ENCODE measurements at regions of chr12 and their contacts with region 1.

Region 1: GRCh38 chr12:70719672-70720420 is 82.6 kb upstream of the PTPRB start:
- DNase-seq: peak; percentile 16 to 94 (median 53)

Region 2: DNA sequence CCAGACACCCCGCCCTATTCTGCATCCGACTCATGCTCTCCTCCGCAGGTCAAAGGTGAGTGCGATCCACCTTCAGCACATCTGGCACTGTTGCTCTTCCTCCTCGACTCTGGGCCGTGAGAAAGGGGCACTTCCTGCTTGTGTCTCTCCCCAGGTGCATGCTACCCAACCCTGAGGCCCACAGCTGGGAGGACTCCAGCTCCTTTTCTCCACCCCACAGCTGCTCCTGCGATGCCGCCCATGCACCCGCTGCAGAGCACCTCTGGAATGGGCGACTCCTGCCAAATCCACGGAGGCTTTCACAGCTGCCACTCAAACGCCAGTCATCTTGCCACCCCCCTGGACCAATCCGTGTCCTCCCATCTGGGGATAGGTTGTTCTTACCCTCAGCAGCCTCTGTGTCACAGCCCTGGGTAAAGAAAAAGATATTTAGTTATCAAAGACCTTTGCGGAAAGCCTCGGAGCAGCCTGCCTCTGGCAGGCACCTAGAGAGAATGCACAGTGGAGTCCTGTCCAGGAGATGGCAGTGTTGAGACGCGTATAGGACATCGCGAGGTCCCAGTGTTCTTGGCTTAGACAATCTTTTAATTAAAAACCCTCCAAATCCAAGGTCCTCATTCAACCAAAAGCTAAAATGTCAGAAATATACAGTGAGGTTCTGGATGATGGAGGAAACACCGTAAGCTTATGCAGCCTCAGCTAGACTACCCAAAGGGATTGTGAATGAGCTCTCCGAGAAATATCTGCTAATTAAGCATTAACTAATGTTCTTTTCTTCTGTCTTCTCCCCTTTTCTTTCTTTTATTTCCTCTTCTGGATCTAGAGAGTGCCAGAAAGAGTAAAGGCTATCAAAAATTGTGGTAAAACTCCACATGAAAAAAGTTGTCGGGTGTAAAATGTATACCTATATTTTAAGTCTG is 840.5 kb before region 1 on chr12:
- intact Hi-C with region 1: loop called (anchors 5 kb)
- DNase-seq: peak; percentile 43 to 95 (median 80)

Region 3: GRCh38 chr12:70590051-70590450 is 129.8 kb before region 1 on chr12:
- intact Hi-C with region 1: loop called (anchors 1 kb)
- DNase-seq: peak in 9 of 10 donors; percentile 58 to 96 (median 79)

Measured in posterior cingulate gyrus (tissue), 11 donors.